ENCODE measurements at regions of chr22 and their contacts with region 1.

Region 1: GRCh38 chr22:23281406-23282088 is 101.2 kb downstream of the BCR start:
- DNase-seq: peak; percentile 76

Region 2: DNA sequence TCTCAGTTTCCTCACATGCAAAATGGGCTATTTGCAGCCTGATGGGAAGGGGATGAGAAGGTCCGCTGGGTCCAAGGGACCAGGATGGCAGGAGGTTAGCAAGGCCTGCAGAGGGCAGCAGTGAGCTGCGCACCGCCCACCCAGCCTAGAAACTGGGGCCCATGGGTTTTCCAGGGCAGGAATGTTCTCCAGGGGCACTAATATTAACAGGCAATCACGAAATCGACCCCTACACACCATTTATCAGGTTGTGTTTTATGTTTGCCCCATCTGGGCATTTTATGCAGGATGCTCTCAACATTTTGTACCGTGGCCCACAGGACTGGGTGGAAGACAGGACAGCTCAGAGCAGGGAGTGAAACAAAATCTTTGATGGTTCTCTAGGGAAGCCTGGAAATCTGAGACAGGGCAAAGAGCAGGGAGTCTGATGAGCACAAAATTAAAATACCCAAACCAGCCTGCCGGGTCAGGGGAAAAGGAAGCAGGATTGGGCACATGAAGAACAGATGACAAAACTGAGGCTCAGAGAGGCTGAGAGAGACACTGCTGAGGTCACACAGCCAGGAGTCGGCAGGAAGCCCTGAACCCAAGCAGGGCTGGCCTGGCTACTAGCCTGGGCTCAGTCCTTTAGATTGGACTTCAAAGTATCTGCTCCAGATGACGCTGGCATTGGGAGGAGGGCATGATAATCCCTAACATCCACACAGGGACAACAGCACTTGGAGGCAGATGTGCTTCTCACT is 102.9 kb before region 1 on chr22:
- in situ Hi-C with region 1: loop called (anchors 10 kb)
- DNase-seq: peak; percentile 80